B cell (primary cell): ENCODE measurements at regions of chr1 and their contacts with region 1.

Region 1: DNA sequence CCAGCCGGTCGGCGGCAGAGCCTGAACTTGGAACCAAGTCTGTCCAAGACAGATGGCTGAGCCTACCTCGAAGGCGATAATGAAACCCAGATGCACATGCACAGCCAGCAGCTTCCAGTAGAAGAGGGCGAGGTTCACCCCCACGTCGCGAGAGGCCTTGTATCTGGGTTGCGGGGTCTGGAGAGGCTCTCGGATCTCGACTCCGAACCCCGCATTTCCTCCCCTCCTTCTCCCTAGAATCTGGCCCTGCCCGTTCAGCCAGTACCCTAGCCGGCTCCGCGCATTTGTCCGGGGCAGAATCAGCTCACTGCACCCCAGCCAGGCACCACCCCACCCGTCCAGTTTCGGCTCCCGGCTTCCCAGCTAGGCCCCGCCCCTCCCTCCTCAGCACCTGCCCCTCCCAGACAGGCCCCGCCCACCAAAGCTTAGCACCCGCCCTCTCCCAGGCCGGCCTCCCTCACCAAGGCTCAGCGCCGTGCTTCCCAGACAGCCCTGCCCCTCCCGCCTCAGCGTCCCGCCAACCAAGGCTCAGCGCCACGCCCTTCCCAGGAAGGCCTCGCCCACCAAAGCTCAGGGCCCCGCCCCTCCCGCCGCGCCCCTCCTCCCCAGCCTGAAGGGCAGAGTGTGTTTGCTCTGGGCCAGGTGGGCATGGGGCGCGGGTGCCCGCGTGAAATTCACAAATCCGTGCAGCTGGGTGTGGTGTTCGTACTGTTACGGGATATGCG is 4.8 kb upstream of the ARHGEF19 start:
- DNase-seq: peak; percentile 96
- ATAC-seq: peak; percentile 99
- H3K4me3 ChIP-seq: peak overlapping the region; percentile 47 to 70 (median 63)
- H3K4me3 Mint-ChIP-seq: peak overlapping the region; percentile 90
- H3K27ac ChIP-seq: peak overlapping the region in 1 of 2 donors; percentile 9
- H3K27ac Mint-ChIP-seq: peak overlapping the region; percentile 59
- H3K4me1 ChIP-seq: peaks cover 14 to 21% of the 10 kb centered on the region in 2 donors
- H3K4me1 Mint-ChIP-seq: peaks cover 19% of the 10 kb centered on the region
- H3K27me3 ChIP-seq: no peaks in the 10 kb centered on the region
- H3K27me3 Mint-ChIP-seq: no peaks in the 10 kb centered on the region
- CTCF ChIP-seq: no peak

Region 2: DNA sequence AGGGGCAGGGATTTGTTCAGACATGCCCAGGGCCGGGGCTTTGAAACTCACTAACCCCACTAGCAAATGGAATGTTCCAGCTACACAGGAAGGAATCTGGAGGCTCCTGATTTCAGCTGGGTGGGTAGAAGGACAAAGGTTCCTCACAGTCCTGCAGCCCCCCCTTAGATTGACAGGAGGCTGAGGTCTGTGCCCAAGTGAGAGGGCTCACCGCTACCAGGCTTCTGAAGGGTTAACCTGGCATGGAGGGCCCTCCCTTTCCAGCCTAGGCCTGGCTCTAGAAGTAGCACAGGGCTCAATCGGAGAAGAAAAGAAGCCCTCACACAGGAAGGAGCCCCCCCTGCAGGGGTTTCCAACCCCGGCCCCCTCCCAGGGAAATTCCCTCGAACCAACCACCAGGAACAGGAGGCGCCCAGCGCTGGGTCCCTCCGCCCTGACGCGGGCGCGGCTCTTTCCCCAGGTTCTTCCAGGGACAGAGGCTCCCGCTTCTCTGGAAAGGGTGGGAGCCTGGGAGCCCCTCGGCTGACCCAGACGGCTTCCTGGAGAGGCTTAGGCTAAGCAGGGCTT is 64.6 kb before region 1 on chr1:
- CTCF ChIA-PET with region 1: no interaction called
- POLR2A ChIA-PET with region 1: no interaction called
- intact Hi-C with region 1: no loop called
- DNase-seq: no peak
- ATAC-seq: no peak
- H3K4me3 ChIP-seq: no peak overlapping the region
- H3K4me3 Mint-ChIP-seq: no peak overlapping the region
- H3K27ac ChIP-seq: no peak overlapping the region
- H3K27ac Mint-ChIP-seq: no peak overlapping the region
- H3K4me1 ChIP-seq: peaks cover 29 to 30% of the 10 kb centered on the region in 2 donors
- H3K4me1 Mint-ChIP-seq: peaks cover 23% of the 10 kb centered on the region
- H3K27me3 ChIP-seq: peaks cover 0 to 74% (median 27%) of the 10 kb centered on the region in 4 experiments
- H3K27me3 Mint-ChIP-seq: peaks cover 33% of the 10 kb centered on the region
- CTCF ChIP-seq: no peak

Region 3: GRCh38 chr1:16167331-16168143 is 49.7 kb before region 1 on chr1:
- CTCF ChIA-PET with region 1: no interaction called
- POLR2A ChIA-PET with region 1: no interaction called
- intact Hi-C with region 1: loop called (anchors 1 kb)
- DNase-seq: peak; percentile 89
- ATAC-seq: peak; percentile 92
- H3K4me3 ChIP-seq: peak overlapping the region in 4 of 5 experiments; percentile 60 to 67 (median 64)
- H3K4me3 Mint-ChIP-seq: peak overlapping the region; percentile 84
- H3K27ac ChIP-seq: peak overlapping the region in 1 of 2 donors; percentile 50
- H3K27ac Mint-ChIP-seq: peak overlapping the region; percentile 50
- H3K4me1 ChIP-seq: peaks cover 21 to 33% of the 10 kb centered on the region in 2 donors
- H3K4me1 Mint-ChIP-seq: peaks cover 27% of the 10 kb centered on the region
- H3K27me3 ChIP-seq: peaks cover 0 to 14% (median 4%) of the 10 kb centered on the region in 4 experiments
- H3K27me3 Mint-ChIP-seq: peaks cover 4% of the 10 kb centered on the region
- CTCF ChIP-seq: no peak

Region 4: DNA sequence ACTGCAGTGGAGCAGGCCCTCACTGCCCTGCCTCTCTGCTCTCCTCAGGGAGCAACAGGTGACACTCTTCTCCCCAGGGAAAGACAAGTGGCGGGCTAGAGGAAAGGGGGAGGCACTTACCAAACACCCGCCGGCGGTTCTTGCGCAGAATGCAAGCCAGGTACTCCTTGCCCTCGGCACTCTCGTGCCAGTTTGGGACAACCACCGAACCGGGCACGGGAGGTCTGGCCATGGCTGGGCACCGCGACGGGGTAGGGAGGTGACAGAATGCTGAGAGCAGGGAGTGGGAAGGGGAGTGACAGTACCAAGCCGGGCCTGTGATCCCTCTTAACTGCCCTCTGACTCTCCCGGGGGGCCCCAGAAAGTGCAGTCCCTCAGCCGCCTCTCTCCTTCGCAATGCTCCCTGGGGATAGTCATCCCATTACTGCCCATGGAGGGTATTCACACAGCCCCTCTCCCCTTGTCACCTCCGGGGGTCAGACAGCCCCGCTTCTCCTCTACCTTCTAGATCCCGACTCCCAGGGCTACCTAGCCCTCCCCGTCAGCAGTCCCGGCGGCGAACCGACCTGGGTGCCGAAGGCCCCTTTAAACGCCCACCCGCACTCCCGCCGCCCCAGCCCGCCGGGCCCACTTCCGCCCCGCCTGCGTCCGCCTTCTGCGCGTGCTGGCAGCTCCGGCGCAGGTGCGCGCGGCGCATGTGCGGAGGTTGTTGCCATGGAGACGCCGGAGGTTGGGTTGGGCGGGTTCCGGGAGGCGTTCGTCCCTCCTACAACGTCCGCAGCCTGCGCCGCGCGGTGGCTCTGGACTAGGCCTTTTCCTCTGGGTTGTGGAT is 19.5 kb after region 1 on chr1 and contains the start of gene CPLANE2:
- CTCF ChIA-PET with region 1: interaction called, 4 read pairs
- POLR2A ChIA-PET with region 1: interaction called, 5 read pairs
- intact Hi-C with region 1: loop called (anchors 1 kb)
- DNase-seq: peak; percentile 97
- ATAC-seq: peak; percentile 79
- H3K4me3 ChIP-seq: peak within 1 kb of the TSS; percentile 55 to 98 (median 76)
- H3K4me3 Mint-ChIP-seq: peak within 1 kb of the TSS; percentile 85
- H3K27ac ChIP-seq: peak within 1 kb of the TSS; percentile 82 to 92
- H3K27ac Mint-ChIP-seq: peak within 1 kb of the TSS; percentile 96
- H3K4me1 ChIP-seq: peaks cover 12 to 17% of the 10 kb centered on the region in 2 donors
- H3K4me1 Mint-ChIP-seq: peaks cover 16% of the 10 kb centered on the region
- H3K27me3 ChIP-seq: no peaks in the 10 kb centered on the region
- H3K27me3 Mint-ChIP-seq: no peaks in the 10 kb centered on the region
- CTCF ChIP-seq: no peak
- total RNA-seq, gene CPLANE2: 11.1 and 14.3 TPM in 2 replicates

Region 5: DNA sequence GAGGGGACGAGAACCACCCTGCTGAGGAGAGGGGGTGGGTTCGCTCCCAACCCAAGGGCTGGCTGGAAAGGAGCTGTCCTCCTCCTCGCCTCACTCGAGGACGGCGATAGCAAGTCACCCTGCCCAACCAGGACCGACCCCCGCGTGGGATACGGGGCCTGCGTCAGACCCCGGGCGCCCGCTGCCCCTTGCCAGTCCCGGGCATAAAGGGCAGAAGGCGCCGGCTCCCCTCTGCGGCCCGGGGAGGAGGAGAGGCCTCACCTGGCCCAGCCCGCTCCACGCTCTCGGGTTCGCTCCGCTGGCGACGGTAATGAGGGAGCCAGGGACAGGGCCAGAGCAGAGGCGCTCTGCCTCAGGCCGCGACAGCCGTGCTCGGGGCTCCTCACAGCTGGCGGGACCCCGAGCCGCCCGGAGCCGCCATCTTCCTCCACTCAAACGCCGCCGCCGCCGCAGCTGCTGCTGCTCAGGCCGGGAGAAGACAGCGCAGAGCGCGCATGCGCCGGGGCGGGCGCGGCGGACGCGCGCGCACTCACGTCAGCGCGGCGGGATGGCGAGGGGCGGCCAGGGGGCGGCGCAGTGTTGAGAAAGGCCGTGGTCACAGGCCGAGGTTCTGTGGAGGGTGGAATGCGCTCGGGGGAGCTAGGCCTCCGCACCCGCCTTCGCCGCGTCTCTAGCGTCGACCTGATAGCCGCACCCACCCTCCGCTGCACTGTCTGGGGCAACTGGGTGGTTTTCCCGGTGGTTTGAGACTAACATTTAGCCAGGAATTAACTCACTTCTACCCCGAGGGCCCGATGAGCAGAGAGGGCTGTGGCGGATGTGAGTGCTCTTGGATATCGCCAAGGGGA is 135.0 kb after region 1 on chr1 and contains the start of gene FBXO42:
- CTCF ChIA-PET with region 1: interaction called, 3 read pairs
- POLR2A ChIA-PET with region 1: no interaction called
- intact Hi-C with region 1: loop called (anchors 5 kb)
- DNase-seq: peak; percentile 96
- ATAC-seq: peak; percentile 93
- H3K4me3 ChIP-seq: peak within 1 kb of the TSS; percentile 66 to 99 (median 81)
- H3K4me3 Mint-ChIP-seq: peak within 1 kb of the TSS; percentile 84
- H3K27ac ChIP-seq: peak within 1 kb of the TSS; percentile 87 to 90
- H3K27ac Mint-ChIP-seq: peak within 1 kb of the TSS; percentile 92
- H3K4me1 ChIP-seq: peaks cover 19 to 30% of the 10 kb centered on the region in 2 donors
- H3K4me1 Mint-ChIP-seq: peaks cover 23% of the 10 kb centered on the region
- H3K27me3 ChIP-seq: no peaks in the 10 kb centered on the region
- H3K27me3 Mint-ChIP-seq: no peaks in the 10 kb centered on the region
- CTCF ChIP-seq: peak; percentile 54
- total RNA-seq, gene FBXO42: 25.4 and 33.1 TPM in 2 replicates

Region 6: GRCh38 chr1:17027403-17027802 is 810.2 kb after region 1 on chr1:
- CTCF ChIA-PET with region 1: no interaction called
- POLR2A ChIA-PET with region 1: no interaction called
- intact Hi-C with region 1: no loop called
- DNase-seq: no peak
- ATAC-seq: no peak
- H3K4me3 ChIP-seq: no peak overlapping the region
- H3K4me3 Mint-ChIP-seq: no peak overlapping the region
- H3K27ac ChIP-seq: no peak overlapping the region
- H3K27ac Mint-ChIP-seq: no peak overlapping the region
- H3K4me1 ChIP-seq: peaks cover 0 to 5% of the 10 kb centered on the region in 2 donors
- H3K4me1 Mint-ChIP-seq: no peaks in the 10 kb centered on the region
- H3K27me3 ChIP-seq: no peaks in the 10 kb centered on the region
- H3K27me3 Mint-ChIP-seq: no peaks in the 10 kb centered on the region
- CTCF ChIP-seq: no peak